ENCODE measurements at regions of chr9 and their contacts with region 1.

Region 1: DNA sequence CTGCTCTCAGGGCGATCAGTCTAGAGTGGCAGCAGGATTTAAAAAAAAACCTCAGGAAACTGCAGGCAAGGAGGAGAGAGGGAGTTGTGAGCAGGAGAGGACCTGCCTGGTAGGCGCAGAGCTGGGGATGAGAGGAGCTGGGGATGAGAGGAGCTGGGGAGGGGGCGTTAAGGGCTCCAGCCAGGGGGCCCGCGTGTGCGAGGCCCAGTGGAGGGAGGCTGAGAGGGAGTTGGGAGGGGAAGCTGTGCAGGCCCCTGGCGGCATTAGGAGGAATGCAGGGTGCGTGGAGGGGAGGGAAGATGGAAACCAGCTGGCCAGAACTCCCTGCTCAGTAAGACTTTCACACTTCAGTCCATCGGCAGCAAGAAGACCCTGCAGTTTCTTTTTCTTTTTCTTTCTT is 45.2 kb upstream of the HMCN2 start:
- DNase-seq: no peak
- CTCF ChIP-seq: no peak

Region 2: GRCh38 chr9:130008538-130008937 is 211.8 kb before region 1 on chr9:
- in situ Hi-C with region 1: no loop called
- DNase-seq: no peak
- CTCF ChIP-seq: no peak

Region 3: DNA sequence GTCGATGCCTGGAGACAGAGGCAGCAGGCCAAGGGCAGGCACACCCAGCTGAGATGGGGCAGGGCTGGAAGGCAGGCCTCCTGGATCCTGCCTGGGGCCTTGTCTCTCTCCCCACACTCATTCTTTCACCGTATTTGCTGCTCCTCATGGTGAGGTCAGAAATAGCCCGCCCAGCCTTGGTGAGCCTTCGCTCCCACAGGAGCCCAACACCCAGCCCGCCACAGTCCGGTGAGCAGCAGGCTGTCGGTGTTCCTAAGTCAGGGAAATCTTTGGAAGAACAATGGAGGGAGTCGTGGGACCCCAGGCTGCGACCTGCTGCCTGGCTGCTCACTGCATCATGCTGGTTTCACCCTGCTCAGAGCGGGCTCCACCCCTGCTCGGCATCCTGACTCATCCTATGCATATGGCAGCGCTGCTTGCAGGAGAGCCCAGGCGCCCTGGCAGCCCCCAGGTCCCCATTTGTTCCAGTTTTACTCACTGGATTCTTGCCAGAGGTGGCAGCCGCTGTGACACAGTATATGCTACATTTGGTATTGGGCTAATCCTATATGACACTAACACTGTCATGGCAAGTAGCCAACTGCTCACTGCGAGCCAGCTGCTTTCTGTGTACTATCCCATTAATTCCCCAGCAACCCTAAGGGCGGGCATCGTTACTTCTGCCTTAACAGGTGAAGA is 101.4 kb before region 1 on chr9:
- in situ Hi-C with region 1: loop called (anchors 10 kb)
- DNase-seq: no peak
- CTCF ChIP-seq: no peak

Region 4: DNA sequence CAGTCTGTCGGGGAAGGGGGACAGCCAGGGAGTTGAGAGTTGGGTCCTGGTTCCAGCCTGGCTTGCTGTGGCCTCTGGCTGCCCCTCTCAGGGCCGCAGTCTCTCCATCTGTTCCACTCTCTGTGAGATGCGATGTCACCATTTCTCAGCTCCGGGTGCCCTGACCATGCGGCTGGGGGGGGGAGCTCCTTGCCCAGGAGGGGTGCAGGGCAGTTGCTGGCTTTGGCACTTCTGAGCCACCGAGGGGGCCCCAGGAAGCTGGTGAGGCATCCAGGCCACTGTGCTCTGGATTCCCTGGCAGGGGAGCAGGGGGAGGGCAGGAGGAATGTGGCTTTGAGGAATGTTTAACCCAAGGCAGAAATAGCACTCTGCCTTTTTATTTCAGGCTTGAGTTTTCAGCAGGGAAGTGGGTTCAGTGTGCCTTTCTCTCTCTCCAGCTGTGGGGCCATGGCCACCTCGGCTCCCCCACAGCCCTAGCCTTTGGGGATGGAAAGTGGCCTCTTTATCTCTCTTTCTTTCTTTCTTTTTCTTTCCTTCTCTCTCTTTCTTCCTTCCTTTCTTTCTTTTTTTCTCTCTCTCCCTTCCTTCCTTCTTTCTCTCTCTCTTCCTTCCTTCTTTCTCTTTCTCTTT is 37.1 kb before region 1 on chr9:
- in situ Hi-C with region 1: no loop called
- DNase-seq: no peak
- CTCF ChIP-seq: no peak